ENCODE measurements at regions of chr12 and their contacts with region 1.

Region 1: DNA sequence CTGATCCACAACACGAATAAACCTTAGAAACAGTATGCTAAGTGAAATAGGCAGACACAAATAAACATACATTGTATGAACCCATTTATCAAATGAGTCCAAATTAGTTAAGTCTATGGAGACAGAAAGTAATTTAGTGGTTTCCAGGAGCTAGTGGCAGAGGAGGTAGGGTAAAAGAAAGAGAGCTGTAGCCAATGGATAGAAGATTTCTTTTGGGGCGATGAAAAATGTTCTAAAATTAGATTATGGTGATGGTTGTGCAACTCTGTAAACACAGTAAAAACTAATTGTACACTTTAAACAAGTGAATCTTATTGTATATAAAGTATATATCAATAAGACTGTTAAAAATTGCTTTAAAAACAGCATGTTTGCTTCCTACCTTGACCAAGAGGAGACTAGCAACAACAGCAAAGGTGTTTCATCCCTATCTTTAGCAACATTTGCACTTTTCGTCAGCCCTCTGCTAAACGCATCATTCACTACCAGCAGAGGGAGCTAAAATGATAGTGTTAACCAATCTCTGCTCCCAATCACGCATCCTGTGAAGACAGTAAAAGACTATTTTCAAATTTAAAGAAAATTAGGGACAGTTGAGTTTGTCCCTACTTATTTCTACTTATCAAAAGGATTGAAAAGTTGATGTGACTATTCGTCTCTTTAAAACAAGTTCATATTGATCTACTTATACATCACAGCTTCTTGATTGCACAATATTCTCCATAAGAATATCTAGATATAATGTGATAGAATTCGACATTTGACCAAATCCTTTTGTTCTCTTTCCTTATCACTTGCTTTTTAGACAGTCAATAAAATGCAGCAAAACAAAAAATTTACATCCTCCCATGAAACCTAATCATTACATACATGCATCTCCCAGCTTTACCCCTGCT is 24.0 kb upstream of the LGR5 start:
- DNase-seq: no peak
- ATAC-seq: peak; percentile 54
- H3K4me3 Mint-ChIP-seq: no peak overlapping the region
- H3K27ac Mint-ChIP-seq: no peak overlapping the region
- H3K4me1 Mint-ChIP-seq: no peaks in the 10 kb centered on the region
- H3K27me3 Mint-ChIP-seq: no peaks in the 10 kb centered on the region
- CTCF ChIP-seq: no peak

Region 2: GRCh38 chr12:70278945-70279344 is 1136.6 kb before region 1 on chr12:
- CTCF ChIA-PET with region 1: no interaction called
- POLR2A ChIA-PET with region 1: no interaction called
- intact Hi-C with region 1: no loop called
- DNase-seq: no peak
- ATAC-seq: no peak
- H3K4me3 Mint-ChIP-seq: no peak overlapping the region
- H3K27ac Mint-ChIP-seq: no peak overlapping the region
- H3K4me1 Mint-ChIP-seq: peaks cover 21% of the 10 kb centered on the region
- H3K27me3 Mint-ChIP-seq: no peaks in the 10 kb centered on the region
- CTCF ChIP-seq: no peak

Region 3: DNA sequence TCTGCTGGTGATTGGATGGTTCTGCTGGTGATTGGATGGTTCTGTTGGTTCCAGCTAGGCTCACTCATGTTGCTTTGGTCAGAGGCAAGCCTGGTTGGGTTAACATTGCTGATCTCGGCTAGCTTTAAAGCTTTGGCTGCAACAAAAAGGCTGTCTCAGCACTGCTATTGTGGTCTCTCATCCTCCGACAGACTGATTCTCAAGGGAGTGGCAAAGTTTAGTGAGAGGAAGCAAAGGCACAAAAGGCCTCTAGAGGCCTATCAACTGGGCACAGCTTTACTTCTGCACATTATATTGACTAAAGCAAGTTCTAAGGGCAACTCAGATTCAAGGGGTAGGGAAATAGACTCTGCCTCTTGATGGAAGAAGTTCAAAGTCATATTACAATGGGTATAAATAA is 60.7 kb before region 1 on chr12:
- CTCF ChIA-PET with region 1: no interaction called
- POLR2A ChIA-PET with region 1: no interaction called
- intact Hi-C with region 1: no loop called
- DNase-seq: no peak
- ATAC-seq: no peak
- H3K4me3 Mint-ChIP-seq: no peak overlapping the region
- H3K27ac Mint-ChIP-seq: no peak overlapping the region
- H3K4me1 Mint-ChIP-seq: no peaks in the 10 kb centered on the region
- H3K27me3 Mint-ChIP-seq: peaks cover 3% of the 10 kb centered on the region
- CTCF ChIP-seq: no peak

Region 4: GRCh38 chr12:71517145-71517846 is 101.7 kb after region 1 on chr12:
- CTCF ChIA-PET with region 1: no interaction called
- POLR2A ChIA-PET with region 1: no interaction called
- intact Hi-C with region 1: no loop called
- DNase-seq: no peak
- ATAC-seq: no peak
- H3K4me3 Mint-ChIP-seq: no peak overlapping the region
- H3K27ac Mint-ChIP-seq: no peak overlapping the region
- H3K4me1 Mint-ChIP-seq: no peaks in the 10 kb centered on the region
- H3K27me3 Mint-ChIP-seq: peaks cover 19% of the 10 kb centered on the region
- CTCF ChIP-seq: no peak

Region 5: DNA sequence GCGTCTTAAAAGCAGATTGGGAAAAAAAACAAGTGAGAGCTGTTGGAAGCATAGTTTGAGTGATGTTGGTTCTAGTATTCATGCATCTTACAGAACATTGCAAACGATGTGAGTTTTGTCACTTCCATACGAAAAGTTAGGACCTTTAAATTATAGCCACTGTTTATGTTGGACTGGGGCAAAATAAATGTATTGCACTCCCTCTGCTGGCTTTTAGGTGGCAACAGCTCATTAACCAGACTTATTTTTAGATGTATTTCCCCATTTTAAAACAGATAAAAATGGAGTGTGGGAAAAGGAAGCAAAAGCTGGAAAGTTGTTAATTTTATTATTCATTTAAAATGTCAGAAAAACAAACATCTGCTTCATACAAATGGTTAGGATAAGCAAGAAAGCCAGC is 135.9 kb after region 1 on chr12:
- CTCF ChIA-PET with region 1: interaction called, 3 read pairs
- POLR2A ChIA-PET with region 1: no interaction called
- intact Hi-C with region 1: loop called (anchors 1 kb)
- DNase-seq: no peak
- ATAC-seq: no peak
- H3K4me3 Mint-ChIP-seq: no peak overlapping the region
- H3K27ac Mint-ChIP-seq: no peak overlapping the region
- H3K4me1 Mint-ChIP-seq: no peaks in the 10 kb centered on the region
- H3K27me3 Mint-ChIP-seq: no peaks in the 10 kb centered on the region
- CTCF ChIP-seq: no peak